ENCODE measurements at regions of chr10 and their contacts with region 1.

Region 1: DNA sequence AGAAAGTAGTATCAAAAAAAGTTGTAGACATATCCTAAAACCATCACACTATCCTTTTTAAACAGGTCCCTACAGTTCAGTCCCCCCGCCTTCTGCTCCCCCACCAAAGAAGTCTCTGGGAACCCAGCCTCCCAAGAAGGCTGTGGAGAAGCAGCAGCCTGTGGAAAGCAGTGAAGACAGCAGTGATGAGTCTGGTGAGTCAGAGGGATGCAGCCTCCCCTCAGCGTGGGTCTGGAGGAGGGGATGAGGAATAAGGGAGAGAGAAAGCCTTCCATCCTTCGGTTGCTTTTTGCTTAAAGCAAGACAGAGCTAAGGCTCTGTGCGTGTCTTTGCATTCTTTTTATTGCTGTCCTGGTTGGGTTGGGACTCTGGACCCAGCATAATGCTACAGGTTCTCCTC is 7.6 kb downstream of the NOLC1 start:
- DNase-seq: no peak
- ATAC-seq: no peak
- H3K4me3 ChIP-seq: no peak overlapping the region
- H3K27ac ChIP-seq: no peak overlapping the region
- H3K4me1 ChIP-seq: no peaks in the 10 kb centered on the region
- H3K27me3 ChIP-seq: no peaks in the 10 kb centered on the region
- CTCF ChIP-seq: no peak

Region 2: DNA sequence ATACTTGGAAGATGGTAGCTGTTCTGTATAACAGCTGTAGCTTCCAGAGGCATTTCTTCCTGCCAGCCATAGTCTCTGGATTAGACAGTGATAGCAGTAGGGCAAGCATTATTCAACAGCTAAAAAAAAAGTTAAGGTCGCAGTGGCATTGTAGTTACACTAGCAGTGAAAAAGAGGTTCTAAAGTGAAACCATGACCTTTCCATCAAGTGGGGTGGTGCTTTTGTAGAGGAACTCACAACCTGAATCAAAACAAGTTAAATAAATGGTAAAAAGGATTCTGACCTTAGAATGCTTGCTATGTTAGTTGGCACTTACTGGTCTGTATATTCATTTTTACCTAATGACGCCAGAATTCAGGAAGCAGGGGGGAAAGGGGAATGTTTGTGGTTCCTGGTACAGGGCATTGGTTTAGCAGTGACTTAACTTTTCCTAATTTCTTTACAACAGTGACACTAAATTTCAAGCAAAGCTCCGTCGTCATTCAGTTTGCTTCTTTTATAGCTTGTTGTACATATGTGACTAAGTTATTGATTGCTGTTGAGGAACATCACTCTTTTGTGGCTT is 140.5 kb after region 1 on chr10:
- intact Hi-C with region 1: no loop called
- DNase-seq: no peak
- ATAC-seq: peak; percentile 69 to 91 (median 87)
- H3K4me3 ChIP-seq: peak overlapping the region; percentile 31
- H3K27ac ChIP-seq: peak overlapping the region; percentile 83
- H3K4me1 ChIP-seq: peaks cover 31% of the 10 kb centered on the region
- H3K27me3 ChIP-seq: no peaks in the 10 kb centered on the region
- CTCF ChIP-seq: no peak

Region 3: DNA sequence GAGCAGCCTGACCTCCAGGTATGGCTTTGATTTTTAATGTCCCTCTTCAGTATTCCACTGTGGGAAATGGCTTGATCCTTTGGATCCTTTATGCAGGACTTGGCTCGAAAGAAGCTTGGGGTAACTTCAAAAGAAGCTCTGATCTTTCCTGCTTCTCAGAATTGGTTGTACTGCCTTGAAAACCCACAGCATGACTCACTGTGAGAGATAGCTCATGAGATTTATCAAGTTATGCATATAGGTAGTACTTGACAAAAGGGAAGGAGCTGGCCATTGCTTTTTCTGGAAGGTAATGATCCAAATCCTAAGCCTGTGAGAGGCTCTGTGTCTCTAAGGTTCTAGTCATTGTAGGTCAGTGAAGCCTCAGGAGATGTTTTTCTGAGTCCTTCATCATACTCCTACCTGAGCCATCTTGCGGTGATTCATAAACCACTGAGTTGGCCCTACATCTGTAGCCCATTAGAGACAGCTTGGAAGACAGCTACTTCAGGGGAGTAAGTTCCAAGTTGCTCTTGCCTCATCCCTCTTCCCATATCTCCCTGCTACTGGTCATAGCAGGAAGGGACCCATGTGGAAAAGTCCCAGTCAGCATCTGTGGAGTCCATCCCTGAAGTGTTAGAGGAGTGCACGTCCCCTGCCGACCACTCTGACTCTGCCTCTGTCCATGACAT is 199.0 kb after region 1 on chr10:
- intact Hi-C with region 1: loop called in 1 of 2 experiments (anchors 5 kb)
- DNase-seq: no peak
- ATAC-seq: no peak
- H3K4me3 ChIP-seq: no peak overlapping the region
- H3K27ac ChIP-seq: no peak overlapping the region
- H3K4me1 ChIP-seq: no peaks in the 10 kb centered on the region
- H3K27me3 ChIP-seq: no peaks in the 10 kb centered on the region
- CTCF ChIP-seq: no peak